ENCODE measurements at regions of chr1 and their contacts with region 1.

Region 1: DNA sequence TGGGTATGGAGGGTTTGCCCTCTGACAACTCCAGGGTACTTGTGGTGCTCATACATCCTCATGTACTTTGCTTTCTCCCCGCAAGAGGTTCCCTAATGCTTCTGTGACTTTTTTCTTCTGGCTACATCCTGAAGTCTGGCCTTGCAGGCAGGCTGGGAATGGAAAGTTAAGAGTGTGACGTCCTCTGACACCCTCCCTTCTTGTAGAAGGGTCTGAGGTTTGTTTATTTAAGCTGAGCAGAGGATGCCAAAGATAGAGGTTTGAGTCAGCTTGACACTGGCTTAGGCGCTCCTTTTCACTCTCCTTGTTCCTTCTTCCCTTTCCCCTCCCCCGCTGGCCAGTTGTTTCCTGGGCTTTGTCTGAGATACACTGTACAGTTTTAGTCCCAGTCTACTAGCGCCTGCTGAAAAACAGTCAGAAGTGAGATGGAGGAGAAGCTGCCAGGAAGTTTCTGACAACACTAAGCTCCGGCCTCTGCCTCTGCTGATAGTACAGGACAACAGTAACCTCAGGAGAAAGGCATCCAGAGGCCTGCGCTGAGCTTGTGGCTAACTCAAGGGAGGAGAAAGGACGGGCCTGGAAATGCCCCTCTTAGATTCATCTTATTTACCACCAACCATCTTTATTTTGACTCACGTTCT is at the start of gene MACF1:
- DNase-seq: peak; percentile 24
- H3K4me3 ChIP-seq: peak within 1 kb of the TSS; percentile 7 to 21
- H3K27ac ChIP-seq: peak within 1 kb of the TSS; percentile 76 to 77
- H3K4me1 ChIP-seq: no peaks in the 10 kb centered on the region
- H3K27me3 ChIP-seq: no peaks in the 10 kb centered on the region
- CTCF ChIP-seq: peak in 1 of 4 experiments; percentile 16
- POLR2A ChIP-seq: no peak
- total RNA-seq, gene MACF1: 154 to 355 TPM

Region 2: DNA sequence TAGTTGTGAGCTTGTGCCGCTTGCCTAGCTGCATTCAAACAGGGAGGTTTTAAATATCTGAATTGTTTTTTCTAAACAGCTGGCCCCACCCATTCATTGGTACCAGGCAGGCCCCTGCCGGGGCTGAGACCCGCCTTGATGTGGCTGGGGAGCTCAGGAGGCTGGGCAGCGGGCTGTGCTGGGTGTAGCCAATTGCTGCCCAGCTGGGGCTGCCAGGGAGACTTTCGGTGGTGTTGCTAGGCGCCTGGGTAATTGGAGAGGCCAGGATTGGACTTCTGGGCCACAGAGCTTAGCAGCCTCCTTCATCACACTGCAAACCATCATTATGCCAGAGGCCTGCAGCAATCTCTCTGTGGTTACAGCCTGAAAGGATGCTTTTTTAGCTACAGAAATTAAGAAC is 275.1 kb before region 1 on chr1:
- intact Hi-C with region 1: no loop called
- DNase-seq: no peak
- H3K4me3 ChIP-seq: no peak overlapping the region
- H3K27ac ChIP-seq: no peak overlapping the region
- H3K4me1 ChIP-seq: no peaks in the 10 kb centered on the region
- H3K27me3 ChIP-seq: no peaks in the 10 kb centered on the region
- CTCF ChIP-seq: no peak
- POLR2A ChIP-seq: no peak

Region 3: DNA sequence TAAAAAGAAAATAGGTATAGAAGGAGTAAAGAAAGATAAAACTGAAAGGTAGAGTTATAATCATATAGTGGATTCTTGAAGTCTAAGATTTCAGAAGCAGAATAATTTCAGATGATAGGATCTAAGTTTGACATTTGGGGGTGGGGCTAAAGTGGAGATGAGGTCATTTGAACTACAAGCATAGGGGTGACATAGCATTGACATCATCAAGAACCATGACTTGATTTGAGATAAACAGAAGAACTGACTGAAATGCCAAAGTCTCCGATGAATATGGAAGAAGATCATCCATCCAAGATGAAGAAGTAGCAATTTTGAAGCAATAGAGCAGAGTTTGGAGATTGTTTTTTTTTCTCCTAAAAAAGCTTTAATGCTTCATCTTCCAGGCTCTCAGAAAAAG is 122.3 kb after region 1 on chr1:
- intact Hi-C with region 1: loop called (anchors 10 kb)
- DNase-seq: no peak
- H3K4me3 ChIP-seq: no peak overlapping the region
- H3K27ac ChIP-seq: peak overlapping the region in 1 of 2 donors; percentile 31
- H3K4me1 ChIP-seq: no peaks in the 10 kb centered on the region
- H3K27me3 ChIP-seq: no peaks in the 10 kb centered on the region
- CTCF ChIP-seq: no peak
- POLR2A ChIP-seq: no peak

Measured in prostate gland (tissue), 2 donors.